ENCODE measurements at regions of chr3 and their contacts with region 1.

Region 1: DNA sequence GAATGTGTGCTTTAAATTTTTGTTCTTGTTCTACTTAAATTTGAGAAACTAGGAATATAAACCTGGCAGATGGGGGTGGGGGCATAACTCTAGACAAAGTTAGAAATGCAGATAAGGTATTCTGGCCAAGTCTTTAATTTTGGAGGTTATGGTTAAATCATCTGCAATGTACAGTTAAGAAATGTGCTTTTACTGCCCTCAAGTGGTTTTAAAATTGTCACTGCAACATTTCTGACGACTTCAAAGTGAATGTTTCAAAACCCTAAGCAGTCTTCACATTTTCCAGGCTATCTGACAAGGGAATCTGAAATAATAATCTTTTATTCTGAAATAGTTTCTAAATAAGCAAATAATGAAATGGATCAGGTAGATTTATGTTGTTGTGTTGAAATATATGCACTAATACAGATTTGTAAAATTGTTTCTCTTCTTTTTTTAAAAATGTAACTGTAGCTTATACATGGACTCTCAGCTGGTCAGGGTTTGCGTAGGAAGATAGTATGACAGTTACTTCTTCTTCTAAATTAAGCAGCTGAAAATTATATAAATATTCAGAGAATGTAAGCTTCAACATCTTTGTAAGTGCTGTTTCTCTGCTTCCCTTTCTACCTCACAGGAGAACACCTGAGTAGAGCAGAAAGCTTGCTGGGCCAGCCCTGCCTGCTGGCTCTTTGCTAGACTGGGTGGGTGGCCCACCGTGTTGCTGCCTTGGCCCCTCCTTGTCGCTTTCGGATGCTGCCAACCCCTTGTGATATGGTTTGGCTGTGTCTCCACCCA is 45.0 kb downstream of the SUCNR1 start:
- DNase-seq: no peak
- H3K4me3 ChIP-seq: no peak overlapping the region
- H3K27ac ChIP-seq: no peak overlapping the region
- H3K4me1 ChIP-seq: no peaks in the 10 kb centered on the region
- H3K27me3 ChIP-seq: no peaks in the 10 kb centered on the region
- CTCF ChIP-seq: peak; percentile 20 to 67 (median 55)
- POLR2A ChIP-seq: no peak

Region 2: DNA sequence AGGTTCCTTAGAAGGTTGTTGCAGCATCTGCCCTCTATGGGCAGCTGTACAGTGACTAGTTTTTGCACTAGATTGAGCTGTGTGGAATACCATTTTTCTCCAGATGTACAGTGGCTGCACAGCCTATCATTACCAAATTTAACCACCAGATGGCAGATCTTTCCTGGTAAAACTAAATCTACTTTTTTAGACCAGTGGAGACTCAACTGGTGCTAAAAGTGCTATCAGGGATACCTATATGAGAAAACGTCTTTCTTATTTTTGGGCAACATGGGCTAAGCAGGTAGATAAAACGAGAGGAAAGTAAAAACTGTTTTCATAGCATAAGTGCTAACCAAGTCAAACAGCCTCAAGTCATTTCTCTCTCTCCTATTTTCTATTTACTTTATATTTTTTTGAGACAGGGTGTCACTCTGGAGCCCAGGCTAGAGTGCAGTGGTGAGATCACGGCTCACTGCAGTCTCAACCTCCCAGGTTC is 478.8 kb before region 1 on chr3:
- intact Hi-C with region 1: loop called (anchors 10 kb)
- DNase-seq: no peak
- H3K4me3 ChIP-seq: no peak overlapping the region
- H3K27ac ChIP-seq: no peak overlapping the region
- H3K4me1 ChIP-seq: no peaks in the 10 kb centered on the region
- H3K27me3 ChIP-seq: no peaks in the 10 kb centered on the region
- CTCF ChIP-seq: peak; percentile 49 to 88 (median 80)
- POLR2A ChIP-seq: no peak

Region 3: GRCh38 chr3:151827816-151828215 is 90.6 kb before region 1 on chr3:
- intact Hi-C with region 1: no loop called
- DNase-seq: no peak
- H3K4me3 ChIP-seq: no peak overlapping the region
- H3K27ac ChIP-seq: no peak overlapping the region
- H3K4me1 ChIP-seq: no peaks in the 10 kb centered on the region
- H3K27me3 ChIP-seq: no peaks in the 10 kb centered on the region
- CTCF ChIP-seq: no peak
- POLR2A ChIP-seq: no peak

Measured in spleen (tissue), 13 donors.